CD8-positive, alpha-beta T cell (primary cell): ENCODE measurements at regions of chr14 and their contacts with region 1.

Region 1: DNA sequence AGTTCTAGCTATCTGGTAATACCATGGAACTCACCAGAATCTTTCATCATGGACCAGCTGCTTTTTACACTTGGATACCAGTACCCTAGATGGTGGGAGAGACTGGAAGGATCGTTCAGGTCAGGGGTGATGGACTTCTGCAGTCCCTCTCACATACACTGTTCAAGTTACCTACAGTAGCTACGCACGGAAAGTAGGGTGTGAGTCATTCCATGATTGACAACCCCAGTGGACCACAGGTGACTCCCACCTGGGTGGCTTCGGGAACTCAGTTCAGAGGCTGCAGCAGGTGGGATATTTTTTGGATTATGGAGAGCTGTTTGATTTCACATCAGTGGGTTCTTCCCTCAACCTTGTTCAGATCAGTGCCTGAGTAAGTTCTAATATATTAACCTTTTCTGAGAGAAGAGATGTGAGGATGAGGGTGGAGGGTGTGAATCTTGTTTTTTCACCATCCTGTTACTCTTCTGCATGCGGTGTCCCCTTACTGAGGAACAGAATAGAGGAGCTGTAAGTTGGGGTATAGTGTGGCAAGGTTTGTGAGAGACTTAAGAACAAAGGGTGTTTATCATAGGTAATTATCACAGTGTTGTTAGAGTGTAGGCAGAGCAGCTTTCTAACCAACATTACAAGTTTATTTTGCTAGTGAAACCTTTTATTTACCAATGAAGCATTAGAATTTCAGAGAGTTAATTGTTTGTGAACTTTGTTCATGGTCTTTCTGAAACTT is 39.6 kb downstream of the PRKCH start:
- DNase-seq: peak in 2 of 9 experiments; percentile 35 to 58
- ATAC-seq: peak; percentile 55
- H3K4me3 ChIP-seq: peak overlapping the region in 1 of 2 experiments; percentile 4
- H3K4me3 Mint-ChIP-seq: peak overlapping the region; percentile 63
- H3K27ac ChIP-seq: peak overlapping the region in 1 of 2 experiments; percentile 18
- H3K27ac Mint-ChIP-seq: peak overlapping the region; percentile 85
- H3K4me1 ChIP-seq: peaks cover 95% of the 10 kb centered on the region
- H3K4me1 Mint-ChIP-seq: peaks cover 54% of the 10 kb centered on the region
- H3K27me3 ChIP-seq: no peaks in the 10 kb centered on the region
- H3K27me3 Mint-ChIP-seq: no peaks in the 10 kb centered on the region
- CTCF ChIP-seq: no peak

Region 2: DNA sequence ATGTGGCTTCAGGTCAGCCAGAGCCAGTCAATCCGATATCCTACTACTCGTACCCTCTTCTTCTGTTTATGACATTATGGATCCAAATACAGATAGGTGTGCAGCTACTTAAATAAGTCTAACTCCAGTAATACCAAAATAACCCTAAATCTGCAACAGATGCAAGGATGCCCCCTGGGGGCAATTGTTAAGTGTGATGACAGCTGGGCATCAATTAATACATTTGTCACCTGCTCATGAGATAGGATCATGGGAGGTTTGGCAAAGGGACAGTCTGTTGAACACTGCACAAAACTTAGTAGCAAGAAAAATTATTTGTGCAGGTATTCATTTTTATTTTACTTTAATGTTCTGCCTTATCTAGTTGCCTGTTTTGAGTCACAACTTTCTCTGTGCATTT is 296.8 kb before region 1 on chr14:
- CTCF ChIA-PET with region 1: no interaction called
- POLR2A ChIA-PET with region 1: no interaction called
- intact Hi-C with region 1: no loop called
- DNase-seq: no peak
- ATAC-seq: no peak
- H3K4me3 ChIP-seq: no peak overlapping the region
- H3K4me3 Mint-ChIP-seq: no peak overlapping the region
- H3K27ac ChIP-seq: no peak overlapping the region
- H3K27ac Mint-ChIP-seq: no peak overlapping the region
- H3K4me1 ChIP-seq: no peaks in the 10 kb centered on the region
- H3K4me1 Mint-ChIP-seq: no peaks in the 10 kb centered on the region
- H3K27me3 ChIP-seq: no peaks in the 10 kb centered on the region
- H3K27me3 Mint-ChIP-seq: no peaks in the 10 kb centered on the region
- CTCF ChIP-seq: no peak

Region 3: GRCh38 chr14:61247935-61248334 is 113.0 kb before region 1 on chr14:
- CTCF ChIA-PET with region 1: no interaction called
- POLR2A ChIA-PET with region 1: no interaction called
- intact Hi-C with region 1: no loop called
- DNase-seq: no peak
- ATAC-seq: no peak
- H3K4me3 ChIP-seq: no peak overlapping the region
- H3K4me3 Mint-ChIP-seq: no peak overlapping the region
- H3K27ac ChIP-seq: no peak overlapping the region
- H3K27ac Mint-ChIP-seq: no peak overlapping the region
- H3K4me1 ChIP-seq: no peaks in the 10 kb centered on the region
- H3K4me1 Mint-ChIP-seq: peaks cover 3% of the 10 kb centered on the region
- H3K27me3 ChIP-seq: no peaks in the 10 kb centered on the region
- H3K27me3 Mint-ChIP-seq: peaks cover 7% of the 10 kb centered on the region
- CTCF ChIP-seq: no peak

Region 4: GRCh38 chr14:61347826-61348443 is 13.0 kb before region 1 on chr14:
- CTCF ChIA-PET with region 1: interaction called, 4 read pairs
- POLR2A ChIA-PET with region 1: interaction called, 6 read pairs
- intact Hi-C with region 1: loop called (anchors 1 to 2 kb)
- DNase-seq: peak in 2 of 9 experiments; percentile 46 to 62
- ATAC-seq: no peak
- H3K4me3 ChIP-seq: peak overlapping the region; percentile 21 to 25
- H3K4me3 Mint-ChIP-seq: peak overlapping the region; percentile 82
- H3K27ac ChIP-seq: peak overlapping the region; percentile 36 to 77
- H3K27ac Mint-ChIP-seq: peak overlapping the region; percentile 99
- H3K4me1 ChIP-seq: peaks cover 98% of the 10 kb centered on the region
- H3K4me1 Mint-ChIP-seq: peaks cover 98% of the 10 kb centered on the region
- H3K27me3 ChIP-seq: no peaks in the 10 kb centered on the region
- H3K27me3 Mint-ChIP-seq: no peaks in the 10 kb centered on the region
- CTCF ChIP-seq: no peak

Region 5: GRCh38 chr14:61381547-61381946 is 20.6 kb after region 1 on chr14:
- CTCF ChIA-PET with region 1: interaction called, 14 read pairs
- POLR2A ChIA-PET with region 1: interaction called, 6 read pairs
- intact Hi-C with region 1: loop called in 1 of 2 experiments (anchors 1 kb)
- DNase-seq: peak in 1 of 9 experiments; percentile 45
- ATAC-seq: no peak
- H3K4me3 ChIP-seq: peak overlapping the region in 1 of 2 experiments; percentile 6
- H3K4me3 Mint-ChIP-seq: peak overlapping the region; percentile 59
- H3K27ac ChIP-seq: peak overlapping the region in 1 of 2 experiments; percentile 90
- H3K27ac Mint-ChIP-seq: no peak overlapping the region
- H3K4me1 ChIP-seq: peaks cover 100% of the 10 kb centered on the region
- H3K4me1 Mint-ChIP-seq: no peaks in the 10 kb centered on the region
- H3K27me3 ChIP-seq: no peaks in the 10 kb centered on the region
- H3K27me3 Mint-ChIP-seq: no peaks in the 10 kb centered on the region
- CTCF ChIP-seq: no peak